CD4-positive, alpha-beta T cell (primary cell): ENCODE measurements at regions of chr9 and their contacts with region 1.

Region 1: DNA sequence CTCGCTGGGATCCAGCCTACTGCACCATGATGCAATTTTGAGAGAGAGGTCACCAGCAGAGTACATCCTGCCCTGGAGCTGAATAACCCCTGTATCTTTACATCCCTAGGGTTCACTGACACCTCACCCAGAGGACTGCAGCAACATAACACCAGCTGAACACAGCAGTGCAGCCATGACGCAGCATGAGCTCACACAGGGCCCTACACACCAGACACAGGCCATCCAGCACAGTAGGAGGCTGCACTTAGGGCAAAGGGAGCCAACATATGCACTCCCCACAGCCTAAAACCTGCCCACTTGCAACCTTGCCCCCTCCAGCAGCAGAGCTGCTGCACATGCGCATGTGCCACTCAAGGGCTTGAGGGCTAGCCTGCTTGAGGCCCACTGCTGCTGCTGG is 157.3 kb upstream of the SMARCA2 start:
- DNase-seq: no peak
- ATAC-seq: no peak
- H3K4me3 ChIP-seq: no peak overlapping the region
- H3K4me3 Mint-ChIP-seq: no peak overlapping the region
- H3K27ac ChIP-seq: no peak overlapping the region
- H3K27ac Mint-ChIP-seq: no peak overlapping the region
- H3K4me1 ChIP-seq: peaks cover 3% of the 10 kb centered on the region
- H3K4me1 Mint-ChIP-seq: peaks cover 21% of the 10 kb centered on the region
- H3K27me3 ChIP-seq: no peaks in the 10 kb centered on the region
- H3K27me3 Mint-ChIP-seq: peaks cover 18% of the 10 kb centered on the region
- CTCF ChIP-seq: no peak

Region 2: DNA sequence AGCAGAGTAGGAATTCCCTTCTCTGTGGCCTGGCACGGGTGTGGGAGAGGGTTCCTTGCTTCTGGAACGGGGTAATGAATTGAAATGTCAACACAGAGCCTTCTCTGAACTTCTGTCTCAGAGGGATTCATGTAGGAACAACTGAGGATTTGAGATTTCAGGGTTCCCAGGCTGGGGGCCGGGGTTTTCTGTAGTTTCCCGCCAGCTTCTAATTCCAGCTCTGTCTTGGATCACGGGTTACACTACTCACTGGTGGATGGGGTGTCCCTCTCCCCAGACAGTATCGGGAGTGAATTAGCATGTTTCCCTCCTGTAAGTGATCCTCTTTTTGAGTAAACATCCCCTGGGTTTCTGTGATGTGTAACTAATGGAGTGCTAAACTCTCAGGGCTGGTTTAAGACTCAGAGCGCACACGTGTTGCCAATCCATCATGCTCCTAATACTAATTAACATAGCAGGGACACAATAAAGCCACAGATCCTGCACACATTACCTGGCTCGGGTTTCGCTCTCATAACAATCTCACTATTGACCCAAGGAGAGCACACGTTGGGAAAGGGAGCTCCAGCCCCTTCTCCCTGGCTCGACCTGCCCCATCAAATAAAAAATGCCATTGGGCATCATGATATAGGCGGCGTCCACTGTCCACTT is 825.7 kb before region 1 on chr9:
- CTCF ChIA-PET with region 1: no interaction called
- POLR2A ChIA-PET with region 1: no interaction called
- intact Hi-C with region 1: no loop called
- DNase-seq: no peak
- ATAC-seq: no peak
- H3K4me3 ChIP-seq: no peak overlapping the region
- H3K4me3 Mint-ChIP-seq: no peak overlapping the region
- H3K27ac ChIP-seq: no peak overlapping the region
- H3K27ac Mint-ChIP-seq: no peak overlapping the region
- H3K4me1 ChIP-seq: no peaks in the 10 kb centered on the region
- H3K4me1 Mint-ChIP-seq: no peaks in the 10 kb centered on the region
- H3K27me3 ChIP-seq: peaks cover 8 to 23% of the 10 kb centered on the region in 2 experiments
- H3K27me3 Mint-ChIP-seq: peaks cover 64% of the 10 kb centered on the region
- CTCF ChIP-seq: no peak

Region 3: DNA sequence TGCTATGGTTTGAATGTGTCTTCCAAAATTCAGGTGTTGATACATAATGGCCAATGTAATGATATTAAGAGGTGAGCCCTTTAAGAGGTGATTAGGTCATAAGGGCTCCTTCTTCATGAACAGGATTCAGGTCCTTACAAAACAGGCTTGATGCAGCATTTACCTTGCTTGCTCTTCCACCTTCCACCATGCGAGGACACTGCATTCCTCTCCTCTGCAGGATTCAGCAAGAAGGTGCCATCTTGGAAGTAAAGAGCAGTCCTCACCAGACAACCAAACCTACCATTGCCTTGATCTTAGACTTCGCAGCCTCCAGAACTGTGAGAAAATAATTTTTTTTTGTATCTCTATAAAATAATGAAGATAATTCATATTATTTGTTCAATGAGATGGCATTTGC is 156.7 kb before region 1 on chr9:
- CTCF ChIA-PET with region 1: no interaction called
- POLR2A ChIA-PET with region 1: no interaction called
- intact Hi-C with region 1: no loop called
- DNase-seq: no peak
- ATAC-seq: no peak
- H3K4me3 ChIP-seq: no peak overlapping the region
- H3K4me3 Mint-ChIP-seq: no peak overlapping the region
- H3K27ac ChIP-seq: no peak overlapping the region
- H3K27ac Mint-ChIP-seq: no peak overlapping the region
- H3K4me1 ChIP-seq: no peaks in the 10 kb centered on the region
- H3K4me1 Mint-ChIP-seq: no peaks in the 10 kb centered on the region
- H3K27me3 ChIP-seq: peaks cover 3 to 10% of the 10 kb centered on the region in 2 experiments
- H3K27me3 Mint-ChIP-seq: peaks cover 48% of the 10 kb centered on the region
- CTCF ChIP-seq: no peak

Region 4: GRCh38 chr9:1775230-1775629 is 82.6 kb before region 1 on chr9:
- CTCF ChIA-PET with region 1: no interaction called
- POLR2A ChIA-PET with region 1: no interaction called
- intact Hi-C with region 1: no loop called
- DNase-seq: no peak
- ATAC-seq: no peak
- H3K4me3 ChIP-seq: no peak overlapping the region
- H3K4me3 Mint-ChIP-seq: no peak overlapping the region
- H3K27ac ChIP-seq: no peak overlapping the region
- H3K27ac Mint-ChIP-seq: no peak overlapping the region
- H3K4me1 ChIP-seq: no peaks in the 10 kb centered on the region
- H3K4me1 Mint-ChIP-seq: no peaks in the 10 kb centered on the region
- H3K27me3 ChIP-seq: no peaks in the 10 kb centered on the region
- H3K27me3 Mint-ChIP-seq: peaks cover 18% of the 10 kb centered on the region
- CTCF ChIP-seq: no peak

Region 5: GRCh38 chr9:2228132-2228531 is 370.3 kb after region 1 on chr9:
- CTCF ChIA-PET with region 1: no interaction called
- POLR2A ChIA-PET with region 1: no interaction called
- intact Hi-C with region 1: loop called in 1 of 2 experiments (anchors 5 kb)
- DNase-seq: no peak
- ATAC-seq: no peak
- H3K4me3 ChIP-seq: no peak overlapping the region
- H3K4me3 Mint-ChIP-seq: no peak overlapping the region
- H3K27ac ChIP-seq: no peak overlapping the region
- H3K27ac Mint-ChIP-seq: no peak overlapping the region
- H3K4me1 ChIP-seq: no peaks in the 10 kb centered on the region
- H3K4me1 Mint-ChIP-seq: no peaks in the 10 kb centered on the region
- H3K27me3 ChIP-seq: no peaks in the 10 kb centered on the region
- H3K27me3 Mint-ChIP-seq: no peaks in the 10 kb centered on the region
- CTCF ChIP-seq: no peak